Heart right ventricle (tissue), 16 donors: ENCODE measurements at regions of chrX and their contacts with region 1.

Region 1: DNA sequence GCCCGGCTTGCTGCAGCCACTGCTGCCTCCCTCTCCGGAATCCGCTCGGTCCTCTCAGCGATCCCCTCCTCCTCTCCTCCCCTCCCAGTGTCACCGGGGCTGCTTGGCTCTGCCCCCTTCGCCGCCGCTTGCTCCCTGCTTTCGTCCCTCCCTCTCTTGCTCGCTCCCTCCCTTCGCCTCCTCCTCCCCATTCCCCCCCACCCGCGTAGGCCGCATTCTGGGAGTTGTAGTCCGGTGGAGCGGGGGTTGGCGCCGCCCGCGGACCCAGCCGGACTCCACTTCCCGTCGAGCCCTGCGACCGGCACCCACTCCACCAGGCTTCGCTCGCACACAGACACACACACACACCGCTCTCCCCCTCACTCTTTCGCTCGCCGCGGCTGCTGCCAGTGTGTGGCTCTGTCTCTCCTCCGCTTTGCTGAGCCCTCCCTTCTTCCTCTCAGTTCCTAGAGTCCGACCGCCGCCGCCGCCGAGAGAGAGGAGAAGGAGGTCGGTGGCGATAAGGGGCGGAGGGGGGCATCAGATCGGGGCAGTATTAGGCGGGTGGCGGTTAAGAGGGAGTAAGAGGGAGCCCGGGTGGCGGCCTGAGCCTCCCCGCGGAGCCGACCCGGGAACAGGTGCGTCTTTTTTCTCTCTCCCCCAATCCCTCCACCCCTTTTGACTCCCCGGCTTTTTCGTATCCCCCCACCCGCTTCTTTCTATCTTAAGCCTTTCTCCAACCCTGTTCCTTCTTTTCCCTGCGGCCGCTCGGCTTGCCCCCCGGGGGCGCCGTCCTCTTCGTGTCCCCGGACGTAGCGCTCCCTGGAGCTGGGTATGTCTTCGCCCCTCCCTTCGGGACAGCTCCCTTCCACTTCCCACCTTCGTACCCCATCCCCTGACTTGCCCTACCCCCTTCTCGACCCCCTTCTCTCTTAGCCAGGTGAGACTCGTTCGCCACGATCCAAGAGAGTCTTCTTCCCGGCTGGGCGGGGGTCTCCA is at the start of gene BCORL1:
- DNase-seq: peak; percentile 88 to 90
- ATAC-seq: peak; percentile 89 to 97 (median 96)
- H3K4me3 ChIP-seq: peak within 1 kb of the TSS in 1 of 10 donors; percentile 58
- H3K27ac ChIP-seq: peak within 1 kb of the TSS in 9 of 10 donors; percentile 30 to 77 (median 65)
- H3K4me1 ChIP-seq: peaks cover 0 to 8% (median 0%) of the 10 kb centered on the region in 9 donors
- H3K27me3 ChIP-seq: no peaks in the 10 kb centered on the region
- CTCF ChIP-seq: no peak
- total RNA-seq, gene BCORL1: 4.9 to 12.8 (median 8.3) TPM

Region 2: GRCh38 chrX:129931411-129932015 is 51.0 kb before region 1 on chrX:
- intact Hi-C with region 1: loop called in 7 of 10 experiments (anchors 1 to 10 kb)
- DNase-seq: peak; percentile 92 to 94
- ATAC-seq: peak; percentile 93 to 97 (median 95)
- H3K4me3 ChIP-seq: peak overlapping the region; percentile 25 to 68 (median 62)
- H3K27ac ChIP-seq: peak overlapping the region; percentile 83 to 95 (median 91)
- H3K4me1 ChIP-seq: no peaks in the 10 kb centered on the region
- H3K27me3 ChIP-seq: peaks cover 0 to 7% (median 0%) of the 10 kb centered on the region in 7 donors
- CTCF ChIP-seq: no peak

Region 3: GRCh38 chrX:129939986-129940385 is 42.6 kb before region 1 on chrX:
- intact Hi-C with region 1: loop called in 1 of 10 experiments (anchors 5 kb)
- DNase-seq: peak; percentile 26 to 27
- ATAC-seq: no peak
- H3K4me3 ChIP-seq: no peak overlapping the region
- H3K27ac ChIP-seq: no peak overlapping the region
- H3K4me1 ChIP-seq: no peaks in the 10 kb centered on the region
- H3K27me3 ChIP-seq: peaks cover 0 to 25% (median 0%) of the 10 kb centered on the region in 7 donors
- CTCF ChIP-seq: no peak

Region 4: DNA sequence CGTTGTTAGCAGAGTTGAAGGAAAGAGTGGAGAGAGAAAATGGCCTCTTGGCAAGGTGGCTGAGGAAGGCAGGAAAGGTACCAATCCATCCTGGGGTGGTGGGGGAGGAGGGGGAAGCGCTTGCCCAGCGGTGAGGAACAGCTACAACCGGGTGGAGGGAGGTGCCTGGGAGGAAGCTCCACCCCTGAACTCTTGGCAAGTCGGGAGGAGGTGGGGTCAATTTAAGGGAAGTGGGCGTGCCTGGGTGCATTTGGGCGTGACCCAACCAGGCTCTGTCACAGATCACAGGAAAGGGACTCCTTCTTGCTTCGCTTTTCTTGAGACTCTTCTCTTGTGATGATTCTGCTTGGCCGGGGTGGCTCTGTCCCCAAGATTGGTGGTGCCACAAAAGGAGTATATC is 41.6 kb after region 1 on chrX:
- intact Hi-C with region 1: loop called in 5 of 10 experiments (anchors 5 kb)
- DNase-seq: peak; percentile 75 to 79
- ATAC-seq: peak; percentile 86 to 98 (median 95)
- H3K4me3 ChIP-seq: no peak overlapping the region
- H3K27ac ChIP-seq: peak overlapping the region in 2 of 10 donors; percentile 46 to 54
- H3K4me1 ChIP-seq: peaks cover 0 to 28% (median 7%) of the 10 kb centered on the region in 9 donors
- H3K27me3 ChIP-seq: no peaks in the 10 kb centered on the region
- CTCF ChIP-seq: no peak

Region 5: GRCh38 chrX:130110379-130111219 is 128.0 kb after region 1 on chrX and contains the start of gene ELF4:
- intact Hi-C with region 1: no loop called
- DNase-seq: peak in 1 of 2 donors; percentile 47
- ATAC-seq: peak in 7 of 8 donors; percentile 31 to 73 (median 55)
- H3K4me3 ChIP-seq: peak within 1 kb of the TSS; percentile 43 to 71 (median 64)
- H3K27ac ChIP-seq: peak within 1 kb of the TSS; percentile 70 to 97 (median 90)
- H3K4me1 ChIP-seq: peaks cover 0 to 21% (median 6%) of the 10 kb centered on the region in 9 donors
- H3K27me3 ChIP-seq: no peaks in the 10 kb centered on the region
- CTCF ChIP-seq: peak in 1 of 9 donors; percentile 15
- total RNA-seq, gene ELF4: 1.8 to 8.6 (median 2.7) TPM

Region 6: DNA sequence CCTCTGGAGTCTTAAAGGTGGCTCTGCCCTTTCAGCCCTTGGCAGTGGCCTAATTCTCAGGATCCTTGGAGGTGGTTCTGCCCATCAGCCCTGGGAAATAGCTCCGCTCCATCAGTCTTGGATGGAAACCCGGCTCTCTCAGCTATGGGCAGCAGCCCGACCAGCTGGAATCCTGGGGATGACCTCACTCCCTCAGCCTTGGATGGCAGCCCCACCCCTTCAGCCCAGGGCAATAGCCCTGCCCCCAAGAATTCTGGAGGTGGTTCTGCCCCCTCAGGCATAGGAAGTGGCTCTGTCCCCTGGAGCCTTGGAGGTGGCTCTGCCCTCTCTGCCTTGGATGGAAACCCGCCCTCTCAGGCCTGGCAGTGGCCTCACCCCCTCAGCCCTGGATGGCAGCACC is 547.0 kb after region 1 on chrX:
- intact Hi-C with region 1: no loop called
- DNase-seq: no peak
- ATAC-seq: no peak
- H3K4me3 ChIP-seq: no peak overlapping the region
- H3K27ac ChIP-seq: no peak overlapping the region
- H3K4me1 ChIP-seq: no peaks in the 10 kb centered on the region
- H3K27me3 ChIP-seq: no peaks in the 10 kb centered on the region
- CTCF ChIP-seq: no peak